Activated naive CD4-positive, alpha-beta T cell treated with anti-CD3 and anti-CD28 coated beads for 36 hours (primary cell): ENCODE measurements at regions of chr3 and their contacts with region 1.

Region 1: GRCh38 chr3:137105277-137105977 is 147.6 kb downstream of the IL20RB start:
- DNase-seq: peak; percentile 25
- H3K4me3 Mint-ChIP-seq: no peak overlapping the region
- H3K27ac Mint-ChIP-seq: no peak overlapping the region
- H3K4me1 Mint-ChIP-seq: no peaks in the 10 kb centered on the region
- H3K27me3 Mint-ChIP-seq: peaks cover 11% of the 10 kb centered on the region

Region 2: DNA sequence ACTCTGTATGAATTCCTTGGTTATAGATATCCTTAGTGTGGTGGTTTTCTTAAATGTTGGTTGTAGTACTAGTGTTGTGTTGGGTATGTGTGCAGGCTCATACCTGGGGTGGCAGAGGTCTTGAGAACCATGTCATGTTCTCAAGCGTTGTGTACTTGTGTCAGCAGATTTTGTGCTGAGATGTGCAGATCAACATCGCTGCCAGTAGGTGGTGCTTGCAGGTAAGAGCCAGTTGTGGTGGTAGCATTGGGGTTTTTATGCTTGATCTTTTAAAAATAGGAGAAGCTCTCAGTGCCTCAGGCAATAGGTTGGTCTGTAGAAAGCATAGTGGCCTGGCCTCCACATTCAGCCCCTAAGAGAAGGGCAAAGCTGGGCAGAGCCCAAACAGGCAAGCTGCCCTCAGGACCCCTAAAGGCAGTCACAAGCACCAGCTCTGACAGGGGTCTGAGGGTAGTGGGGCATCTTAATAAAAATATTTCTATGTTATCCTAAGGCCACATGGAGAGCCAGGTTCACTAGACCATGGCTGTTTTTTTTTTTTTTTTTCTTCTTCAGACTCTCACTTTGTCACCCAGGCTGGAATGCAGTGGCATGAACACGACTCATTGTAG is 16.4 kb after region 1 on chr3:
- CTCF ChIA-PET with region 1: interaction called, 16 read pairs
- intact Hi-C with region 1: no loop called
- DNase-seq: peak; percentile 48
- H3K4me3 Mint-ChIP-seq: no peak overlapping the region
- H3K27ac Mint-ChIP-seq: no peak overlapping the region
- H3K4me1 Mint-ChIP-seq: no peaks in the 10 kb centered on the region
- H3K27me3 Mint-ChIP-seq: no peaks in the 10 kb centered on the region

Region 3: GRCh38 chr3:137438561-137438960 is 333.1 kb after region 1 on chr3:
- CTCF ChIA-PET with region 1: no interaction called
- intact Hi-C with region 1: no loop called
- DNase-seq: no peak
- H3K4me3 Mint-ChIP-seq: no peak overlapping the region
- H3K27ac Mint-ChIP-seq: no peak overlapping the region
- H3K4me1 Mint-ChIP-seq: no peaks in the 10 kb centered on the region
- H3K27me3 Mint-ChIP-seq: no peaks in the 10 kb centered on the region

Region 4: GRCh38 chr3:137792626-137793271 is 687.3 kb after region 1 on chr3:
- CTCF ChIA-PET with region 1: no interaction called
- intact Hi-C with region 1: loop called (anchors 10 kb)
- DNase-seq: peak; percentile 28
- H3K4me3 Mint-ChIP-seq: no peak overlapping the region
- H3K27ac Mint-ChIP-seq: no peak overlapping the region
- H3K4me1 Mint-ChIP-seq: no peaks in the 10 kb centered on the region
- H3K27me3 Mint-ChIP-seq: peaks cover 15% of the 10 kb centered on the region

Region 5: DNA sequence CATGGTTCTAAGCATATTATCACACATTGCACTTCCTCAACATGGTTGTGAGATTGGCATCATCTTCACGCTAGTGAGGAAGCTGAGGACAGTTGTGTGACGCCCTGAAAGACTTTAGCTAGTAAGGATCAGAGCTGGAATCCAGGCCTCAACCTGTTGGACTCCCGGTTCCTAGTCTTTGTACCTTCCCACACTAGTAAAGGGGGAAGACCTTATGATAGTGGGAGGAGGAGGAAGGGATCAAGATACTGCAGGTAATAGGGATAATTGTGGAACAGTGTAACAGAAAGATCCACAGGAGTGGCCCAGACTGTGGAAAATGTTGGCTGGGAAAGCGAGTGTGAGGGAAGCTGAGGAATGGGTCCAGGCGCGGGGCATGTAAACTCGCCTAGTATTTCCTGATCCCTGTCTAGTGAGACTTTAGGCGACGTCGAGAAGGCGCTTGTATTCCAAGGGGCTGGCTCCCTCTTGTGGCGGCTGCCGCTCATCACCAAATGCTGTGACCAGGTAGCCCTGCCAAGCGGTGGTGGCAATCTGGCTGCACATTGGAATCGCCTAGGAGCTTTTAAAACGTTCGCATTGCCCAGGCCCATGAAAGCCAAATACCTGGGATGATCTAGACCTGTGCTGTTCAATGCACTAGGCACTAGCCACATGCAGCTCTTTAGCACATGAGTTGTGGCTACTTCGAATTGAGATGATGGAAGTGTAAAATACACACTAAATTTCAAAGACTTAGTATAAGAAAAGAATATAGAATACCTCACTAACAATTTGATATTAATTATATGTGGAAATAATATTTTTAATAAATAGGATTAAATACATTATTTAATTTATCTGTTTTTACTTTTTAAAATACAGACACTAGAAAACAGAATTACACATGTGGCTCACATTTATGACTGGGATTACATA is 865.7 kb after region 1 on chr3:
- CTCF ChIA-PET with region 1: interaction called, 3 read pairs
- intact Hi-C with region 1: loop called (anchors 1 kb)
- DNase-seq: peak; percentile 77
- H3K4me3 Mint-ChIP-seq: no peak overlapping the region
- H3K27ac Mint-ChIP-seq: no peak overlapping the region
- H3K4me1 Mint-ChIP-seq: no peaks in the 10 kb centered on the region
- H3K27me3 Mint-ChIP-seq: peaks cover 12% of the 10 kb centered on the region

Region 6: DNA sequence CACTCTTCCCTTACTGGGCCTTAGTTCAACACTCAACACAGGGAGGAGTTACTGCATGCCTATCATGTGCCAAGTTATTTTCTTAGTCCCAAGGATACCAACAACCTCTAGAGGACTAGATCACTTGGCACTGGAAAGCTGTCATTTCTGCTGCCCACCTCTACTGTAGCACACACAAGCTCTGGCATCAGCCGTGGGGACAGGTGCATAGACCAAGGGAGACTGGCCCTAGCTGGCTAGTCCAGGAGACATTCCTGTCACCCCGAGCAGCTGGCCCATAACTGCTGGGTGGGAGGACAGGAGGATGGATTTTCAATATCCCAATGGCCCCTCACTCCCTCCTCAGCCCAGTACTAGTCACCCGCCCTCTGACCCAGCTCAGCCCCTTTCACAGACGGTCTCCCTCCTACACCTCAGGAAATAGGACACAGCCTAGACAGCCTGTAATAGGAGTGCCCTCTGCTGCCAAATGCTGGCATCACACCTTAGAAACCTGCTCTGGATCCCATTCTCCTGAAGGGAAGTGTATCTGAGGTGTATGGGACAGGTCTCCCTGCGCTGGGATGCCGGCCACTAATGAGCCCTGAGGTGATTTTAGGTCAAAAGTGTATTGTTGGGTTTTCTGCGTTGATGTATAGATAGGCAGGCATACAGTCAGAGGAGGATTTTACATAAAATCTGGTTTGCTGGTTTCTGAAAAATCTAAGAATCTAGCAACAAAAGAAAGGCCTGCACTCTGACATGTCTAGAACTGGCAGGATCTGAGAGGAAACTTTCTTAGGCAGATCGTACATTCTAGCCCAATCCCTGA is 1013.4 kb after region 1 on chr3:
- CTCF ChIA-PET with region 1: no interaction called
- intact Hi-C with region 1: loop called (anchors 5 kb)
- DNase-seq: peak; percentile 76
- H3K4me3 Mint-ChIP-seq: no peak overlapping the region
- H3K27ac Mint-ChIP-seq: no peak overlapping the region
- H3K4me1 Mint-ChIP-seq: peaks cover 5% of the 10 kb centered on the region
- H3K27me3 Mint-ChIP-seq: peaks cover 32% of the 10 kb centered on the region